ENCODE measurements at regions of chr12 and their contacts with region 1.

Region 1: DNA sequence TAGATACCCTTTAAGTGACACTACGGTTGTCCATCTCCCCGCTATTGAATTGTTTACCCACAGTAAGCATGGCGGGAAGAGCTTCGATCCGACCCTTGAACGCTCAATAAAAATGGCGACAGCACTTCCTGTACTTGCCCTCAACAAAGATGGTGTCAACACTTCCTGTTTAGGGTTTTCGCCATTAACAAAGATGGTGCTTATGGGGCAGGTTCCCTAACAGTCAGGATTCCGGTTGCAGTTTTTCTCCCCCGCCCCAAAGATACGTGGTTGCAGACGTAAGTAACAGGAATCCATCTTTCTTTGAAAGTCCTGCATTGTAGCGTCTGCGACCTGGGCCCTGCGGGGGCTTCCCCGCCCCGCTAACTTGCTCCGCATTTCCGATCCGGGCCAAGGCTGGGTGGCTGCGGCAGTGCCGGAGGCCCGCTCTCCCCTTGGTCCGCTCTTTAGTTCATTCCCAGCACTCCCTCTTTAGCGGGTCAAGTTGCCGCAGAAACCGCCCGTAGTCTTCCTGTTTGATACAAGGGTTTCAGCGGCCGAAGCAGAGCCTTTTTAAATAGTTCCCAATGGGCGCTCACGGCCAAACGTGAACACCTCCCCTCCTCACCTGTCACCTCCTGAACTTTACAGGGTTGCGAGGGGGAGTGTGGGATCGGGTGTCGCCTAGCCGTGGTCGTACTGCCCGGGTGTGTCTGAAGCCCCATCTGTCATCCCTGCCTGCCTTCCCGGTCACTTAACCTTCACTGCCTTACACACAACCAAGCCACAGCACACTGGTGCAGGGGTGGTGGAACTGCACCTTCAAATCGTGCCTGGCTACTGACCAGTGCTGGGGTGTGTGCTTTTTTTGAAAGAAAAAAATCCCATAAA is at the start of gene CRADD:
- DNase-seq: peak; percentile 75 to 97 (median 95)
- ATAC-seq: peak; percentile 95
- H3K4me3 ChIP-seq: peak within 1 kb of the TSS; percentile 93
- H3K4me3 Mint-ChIP-seq: peak within 1 kb of the TSS; percentile 82 to 100 (median 98)
- H3K27ac ChIP-seq: peak within 1 kb of the TSS; percentile 99
- H3K27ac Mint-ChIP-seq: peak within 1 kb of the TSS; percentile 97 to 100 (median 100)
- H3K4me1 ChIP-seq: peaks cover 5 to 9% of the 10 kb centered on the region in 2 donors
- H3K4me1 Mint-ChIP-seq: peaks cover 19 to 56% (median 41%) of the 10 kb centered on the region in 7 donors
- H3K27me3 ChIP-seq: no peaks in the 10 kb centered on the region
- H3K27me3 Mint-ChIP-seq: peaks cover 2 to 13% (median 9%) of the 10 kb centered on the region in 5 donors
- total RNA-seq, gene CRADD: 11.4 to 17.1 (median 13.8) TPM

Region 2: DNA sequence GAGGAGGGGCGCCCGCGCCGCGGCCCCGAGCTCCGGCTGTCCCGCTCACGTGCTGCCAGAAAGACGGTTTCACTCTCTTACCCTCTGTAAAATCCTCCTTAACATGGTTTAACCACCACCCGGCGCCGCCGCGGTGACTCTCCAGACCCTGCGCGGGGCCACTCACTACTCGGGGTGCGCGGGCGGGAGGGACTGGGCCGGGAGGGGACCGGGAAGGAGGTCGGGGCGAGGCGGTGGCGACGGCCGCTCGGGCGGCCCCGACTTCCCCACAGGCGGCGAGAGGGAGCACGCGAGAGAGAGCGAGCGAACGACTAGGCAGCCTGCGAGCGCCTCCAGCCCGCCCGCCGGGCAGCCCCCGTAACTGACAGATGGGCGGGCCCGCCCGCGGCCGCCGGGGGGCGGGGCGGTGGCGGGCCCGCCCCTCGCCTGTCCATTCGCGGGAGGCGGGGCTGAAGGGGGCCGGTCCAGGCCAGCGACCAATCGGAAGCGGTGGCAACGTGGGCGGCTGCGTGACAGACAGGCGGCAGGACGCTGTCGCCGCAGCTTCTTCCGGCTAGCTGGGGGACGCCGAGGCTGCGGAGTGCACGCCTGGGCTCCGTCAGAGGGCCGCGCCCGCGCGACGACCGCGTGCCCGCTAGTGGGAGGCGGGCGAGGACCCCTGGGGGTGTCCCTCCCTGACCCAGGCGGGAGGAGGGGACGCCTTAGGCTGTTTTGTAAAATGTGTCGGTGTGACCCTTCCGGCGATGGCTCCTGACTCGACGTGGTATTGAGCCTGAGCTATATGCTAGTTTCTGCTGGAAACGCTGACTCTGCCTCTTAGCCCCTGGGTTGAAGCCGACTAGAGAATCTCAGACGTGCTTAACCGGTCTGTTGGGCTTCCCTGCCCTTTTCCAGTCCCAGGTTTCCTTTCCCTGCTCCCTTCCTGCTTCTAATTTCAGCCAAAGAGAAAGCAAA is 748.2 kb before region 1 on chr12 and contains the start of gene EEA1:
- CTCF ChIA-PET with region 1: no interaction called
- POLR2A ChIA-PET with region 1: no interaction called
- intact Hi-C with region 1: loop called (anchors 1 kb)
- DNase-seq: peak; percentile 89 to 96 (median 91)
- ATAC-seq: peak; percentile 93
- H3K4me3 ChIP-seq: peak within 1 kb of the TSS; percentile 71
- H3K4me3 Mint-ChIP-seq: peak within 1 kb of the TSS; percentile 75 to 94 (median 91)
- H3K27ac ChIP-seq: peak within 1 kb of the TSS; percentile 96
- H3K27ac Mint-ChIP-seq: peak within 1 kb of the TSS; percentile 89 to 99 (median 93)
- H3K4me1 ChIP-seq: peaks cover 19 to 23% of the 10 kb centered on the region in 2 donors
- H3K4me1 Mint-ChIP-seq: peaks cover 20 to 53% (median 37%) of the 10 kb centered on the region in 7 donors
- H3K27me3 ChIP-seq: no peaks in the 10 kb centered on the region
- H3K27me3 Mint-ChIP-seq: peaks cover 0 to 6% (median 0%) of the 10 kb centered on the region in 5 donors
- total RNA-seq, gene EEA1: 20.9 to 28.3 (median 27.9) TPM

Region 3: DNA sequence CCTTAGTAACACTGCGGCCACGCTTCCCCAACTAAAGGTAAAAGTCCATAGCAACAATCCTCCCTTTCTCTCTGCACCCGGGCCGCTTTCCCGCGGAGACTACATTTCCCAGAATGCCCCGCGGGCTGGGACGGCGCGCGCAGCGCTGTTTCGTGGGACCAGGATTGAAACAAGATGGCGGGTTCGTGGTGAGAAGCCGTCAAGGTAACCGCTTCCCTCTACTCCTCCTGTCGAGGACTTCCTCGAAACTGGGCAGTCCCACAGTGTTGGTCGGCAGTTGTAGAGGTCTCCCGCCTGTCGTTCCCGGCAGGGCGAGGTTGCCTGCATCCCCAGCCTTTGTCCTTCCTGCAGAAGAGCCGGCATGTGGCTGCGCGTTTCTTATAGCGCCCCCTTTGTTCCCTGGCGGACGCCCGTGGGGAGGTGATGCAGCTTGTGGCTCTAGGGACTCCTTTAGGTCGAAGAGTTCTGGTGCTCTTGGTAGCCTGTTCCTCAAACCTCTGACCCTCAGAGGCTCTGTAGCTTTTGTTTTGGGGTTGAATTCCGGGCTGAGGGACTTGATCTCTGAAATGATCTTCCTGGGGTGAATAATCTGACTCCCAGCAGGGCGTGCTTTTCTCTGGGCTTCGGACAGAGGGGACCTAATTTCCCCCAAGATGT is 210.0 kb before region 1 on chr12 and contains the start of gene MRPL42:
- CTCF ChIA-PET with region 1: no interaction called
- POLR2A ChIA-PET with region 1: interaction called, 3 read pairs
- intact Hi-C with region 1: loop called (anchors 1 kb)
- DNase-seq: peak; percentile 86 to 96 (median 94)
- ATAC-seq: peak; percentile 97
- H3K4me3 ChIP-seq: peak within 1 kb of the TSS; percentile 94
- H3K4me3 Mint-ChIP-seq: peak within 1 kb of the TSS; percentile 85 to 96 (median 93)
- H3K27ac ChIP-seq: peak within 1 kb of the TSS; percentile 85
- H3K27ac Mint-ChIP-seq: peak within 1 kb of the TSS; percentile 90 to 98 (median 95)
- H3K4me1 ChIP-seq: peaks cover 8 to 10% of the 10 kb centered on the region in 2 donors
- H3K4me1 Mint-ChIP-seq: peaks cover 28 to 48% (median 36%) of the 10 kb centered on the region in 7 donors
- H3K27me3 ChIP-seq: no peaks in the 10 kb centered on the region
- H3K27me3 Mint-ChIP-seq: no peaks in the 10 kb centered on the region
- total RNA-seq, gene MRPL42: 30.1 to 65.8 (median 45.6) TPM

Region 4: DNA sequence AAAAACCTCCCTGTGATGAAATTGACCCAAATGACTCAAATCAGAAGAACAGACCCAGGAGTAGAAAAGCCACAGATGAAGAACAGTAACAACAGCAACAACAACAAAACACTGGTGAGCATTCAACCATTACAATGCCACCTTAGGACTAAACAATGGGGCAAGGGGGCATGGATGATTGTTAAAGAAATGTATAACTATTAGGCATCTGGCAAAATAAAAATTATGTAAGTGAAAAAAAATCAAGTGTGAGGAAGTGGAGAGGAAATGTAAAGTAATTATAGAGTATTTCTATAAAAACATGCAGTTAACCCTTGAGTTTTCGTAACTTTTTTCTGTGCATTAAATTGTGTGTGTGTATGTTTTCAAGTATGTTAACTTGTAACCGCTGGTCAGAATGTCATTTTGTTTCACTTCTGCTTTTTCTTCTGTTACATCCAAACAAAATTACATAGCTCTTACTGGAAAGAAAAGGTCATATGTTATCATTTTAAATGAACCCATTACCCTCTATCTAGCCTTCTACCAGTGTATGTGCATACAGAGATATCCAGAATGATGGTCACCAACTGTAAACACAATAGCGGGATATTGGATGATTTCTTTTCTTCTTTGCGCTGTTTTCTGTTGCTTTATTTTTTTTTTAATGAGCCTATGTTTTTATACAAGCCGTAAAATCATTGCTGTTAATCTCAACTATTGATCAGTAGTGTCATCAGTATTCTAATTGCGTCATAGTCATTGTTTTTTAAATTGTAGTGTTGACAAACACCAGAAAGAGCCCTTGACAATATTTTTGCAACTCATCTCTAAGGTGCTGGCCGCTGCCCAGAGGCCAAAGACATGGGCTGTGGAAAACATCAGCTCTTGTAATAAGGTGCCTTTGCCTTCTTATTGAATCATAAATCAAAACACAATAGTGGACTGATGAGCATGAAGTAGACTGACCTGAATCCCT is 170.4 kb after region 1 on chr12:
- CTCF ChIA-PET with region 1: no interaction called
- POLR2A ChIA-PET with region 1: no interaction called
- intact Hi-C with region 1: loop called in 1 of 2 experiments (anchors 5 kb)
- DNase-seq: no peak
- ATAC-seq: peak; percentile 40
- H3K4me3 ChIP-seq: no peak overlapping the region
- H3K4me3 Mint-ChIP-seq: peak overlapping the region in 2 of 10 donors; percentile 59 to 68
- H3K27ac ChIP-seq: no peak overlapping the region
- H3K27ac Mint-ChIP-seq: peak overlapping the region in 3 of 9 donors; percentile 31 to 85 (median 46)
- H3K4me1 ChIP-seq: peaks cover 0 to 13% of the 10 kb centered on the region in 2 donors
- H3K4me1 Mint-ChIP-seq: peaks cover 12 to 61% (median 23%) of the 10 kb centered on the region in 7 donors
- H3K27me3 ChIP-seq: no peaks in the 10 kb centered on the region
- H3K27me3 Mint-ChIP-seq: no peaks in the 10 kb centered on the region

Region 5: DNA sequence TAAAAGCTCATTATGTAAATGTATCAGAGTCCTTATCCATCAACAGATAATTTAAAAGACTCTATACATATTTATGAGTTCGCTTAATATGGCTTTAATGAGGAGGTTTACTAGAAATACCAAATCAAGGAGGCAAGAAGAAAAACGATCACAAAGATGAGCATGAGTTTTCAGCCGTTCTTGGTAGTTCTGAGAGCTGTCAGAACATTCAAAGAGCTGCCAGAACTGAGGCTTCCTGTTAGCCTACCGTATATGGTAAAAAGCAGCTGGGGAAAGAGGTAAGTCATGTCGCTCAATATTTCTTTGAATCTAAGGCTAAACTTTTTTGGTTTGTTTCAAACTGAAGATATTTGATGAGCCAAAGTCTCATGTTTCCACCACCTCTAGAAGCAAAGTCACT is 355.7 kb after region 1 on chr12:
- CTCF ChIA-PET with region 1: no interaction called
- POLR2A ChIA-PET with region 1: interaction called, 8 read pairs
- intact Hi-C with region 1: loop called in 1 of 2 experiments (anchors 1 kb)
- DNase-seq: peak in 7 of 9 donors; percentile 28 to 68 (median 52)
- ATAC-seq: peak; percentile 90
- H3K4me3 ChIP-seq: peak overlapping the region; percentile 4
- H3K4me3 Mint-ChIP-seq: peak overlapping the region; percentile 44 to 89 (median 74)
- H3K27ac ChIP-seq: peak overlapping the region; percentile 52
- H3K27ac Mint-ChIP-seq: peak overlapping the region; percentile 47 to 97 (median 88)
- H3K4me1 ChIP-seq: peaks cover 0 to 45% of the 10 kb centered on the region in 2 donors
- H3K4me1 Mint-ChIP-seq: peaks cover 24 to 65% (median 52%) of the 10 kb centered on the region in 7 donors
- H3K27me3 ChIP-seq: no peaks in the 10 kb centered on the region
- H3K27me3 Mint-ChIP-seq: no peaks in the 10 kb centered on the region

Region 6: DNA sequence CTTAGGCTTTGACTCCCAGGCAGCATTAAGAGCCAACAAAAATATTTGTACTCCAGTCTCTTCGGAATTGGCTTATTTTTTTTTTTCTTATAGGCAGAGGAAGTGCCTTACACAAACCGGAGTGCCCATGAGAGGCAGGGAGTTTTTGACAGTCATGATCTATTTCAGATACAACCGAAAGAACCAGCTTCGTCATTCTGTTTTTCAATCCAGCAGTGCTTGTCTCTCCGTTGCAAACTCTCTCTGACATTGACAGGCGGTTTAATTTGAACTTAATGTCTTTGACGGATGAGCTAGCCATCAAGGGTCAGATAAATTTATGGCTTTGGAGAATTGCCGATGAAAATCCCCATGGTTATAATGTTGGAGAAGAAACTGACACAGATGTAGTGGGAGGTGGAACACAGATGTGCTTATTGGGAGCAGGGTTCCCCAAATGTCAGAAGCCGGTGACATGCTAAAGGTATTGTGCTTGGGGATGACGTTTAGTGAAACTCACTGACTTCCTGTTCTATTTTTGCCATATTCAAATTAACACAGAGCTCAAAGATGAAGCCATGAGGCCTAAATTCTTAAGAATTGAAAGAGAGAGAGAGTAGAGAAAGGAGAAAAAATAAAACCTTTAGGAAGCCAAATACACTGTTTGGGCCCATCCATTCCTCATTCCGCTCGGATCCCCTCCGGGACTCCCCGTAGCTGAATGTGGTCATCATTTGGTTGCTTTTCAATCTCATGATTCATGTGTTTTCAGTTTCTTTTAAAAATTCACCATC is 530.6 kb after region 1 on chr12:
- CTCF ChIA-PET with region 1: no interaction called
- POLR2A ChIA-PET with region 1: no interaction called
- intact Hi-C with region 1: loop called in 1 of 2 experiments (anchors 5 kb)
- DNase-seq: peak in 8 of 9 donors; percentile 24 to 55 (median 48)
- ATAC-seq: peak; percentile 86
- H3K4me3 ChIP-seq: peak overlapping the region; percentile 58
- H3K4me3 Mint-ChIP-seq: peak overlapping the region; percentile 70 to 87 (median 82)
- H3K27ac ChIP-seq: peak overlapping the region; percentile 61
- H3K27ac Mint-ChIP-seq: peak overlapping the region; percentile 90 to 98 (median 94)
- H3K4me1 ChIP-seq: peaks cover 40 to 49% of the 10 kb centered on the region in 2 donors
- H3K4me1 Mint-ChIP-seq: peaks cover 36 to 58% (median 56%) of the 10 kb centered on the region in 7 donors
- H3K27me3 ChIP-seq: no peaks in the 10 kb centered on the region
- H3K27me3 Mint-ChIP-seq: no peaks in the 10 kb centered on the region

Region 7: DNA sequence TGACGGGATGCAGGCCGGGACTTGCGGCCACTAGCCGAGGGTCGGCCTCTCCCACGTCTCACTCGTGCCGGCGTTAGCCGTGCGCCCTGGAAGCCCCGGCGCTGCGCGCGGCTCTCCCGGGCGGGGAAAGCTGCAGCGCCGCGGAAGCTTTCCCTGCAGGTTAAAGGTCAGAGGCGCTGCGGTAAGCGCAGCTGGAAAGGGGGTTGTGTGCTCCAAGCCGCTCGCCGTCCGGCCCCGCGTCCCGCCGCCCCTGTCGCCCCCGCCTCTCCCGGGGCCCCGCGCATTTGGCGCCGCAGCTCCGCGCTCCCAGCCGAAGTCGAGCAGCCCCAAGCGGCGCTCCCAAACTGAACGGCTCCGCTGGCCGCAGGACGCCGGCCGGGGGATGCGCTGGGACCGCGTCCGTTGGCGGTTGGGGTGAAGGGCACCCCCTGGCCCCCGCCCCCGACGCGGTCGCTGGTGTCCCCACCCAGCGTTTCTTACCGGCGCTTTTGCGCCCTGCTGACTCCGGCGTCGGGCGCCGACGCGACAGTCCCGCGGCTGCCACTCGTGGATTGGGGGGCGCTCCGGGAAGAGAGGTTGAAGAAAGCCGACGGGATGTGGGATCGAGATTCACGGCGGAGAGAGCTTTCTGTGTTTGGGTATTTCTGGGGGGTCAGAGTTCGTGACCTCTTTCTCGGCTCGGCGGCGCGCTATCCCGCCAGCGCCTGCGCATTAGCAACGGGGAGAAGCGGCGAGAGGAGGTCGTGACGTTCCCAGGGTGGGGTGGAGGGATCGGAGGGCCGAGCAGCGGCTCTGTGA is 1395.7 kb after region 1 on chr12 and contains the start of gene NR2C1:
- CTCF ChIA-PET with region 1: no interaction called
- POLR2A ChIA-PET with region 1: no interaction called
- intact Hi-C with region 1: loop called in 1 of 2 experiments (anchors 1 kb)
- DNase-seq: peak; percentile 76 to 95 (median 92)
- ATAC-seq: peak; percentile 98
- H3K4me3 ChIP-seq: peak within 1 kb of the TSS; percentile 81
- H3K4me3 Mint-ChIP-seq: peak within 1 kb of the TSS; percentile 92 to 98 (median 94)
- H3K27ac ChIP-seq: peak within 1 kb of the TSS; percentile 81
- H3K27ac Mint-ChIP-seq: peak within 1 kb of the TSS; percentile 84 to 96 (median 93)
- H3K4me1 ChIP-seq: peaks cover 0 to 9% of the 10 kb centered on the region in 2 donors
- H3K4me1 Mint-ChIP-seq: peaks cover 8 to 40% (median 30%) of the 10 kb centered on the region in 7 donors
- H3K27me3 ChIP-seq: no peaks in the 10 kb centered on the region
- H3K27me3 Mint-ChIP-seq: peaks cover 0 to 5% (median 0%) of the 10 kb centered on the region in 5 donors
- total RNA-seq, gene NR2C1: 30.5 to 66.8 (median 58.7) TPM

Measured in naive thymus-derived CD4-positive, alpha-beta T cell (primary cell).